CD14-positive monocyte (primary cell): ENCODE measurements at regions of chr13 and their contacts with region 1.

Region 1: GRCh38 chr13:48879854-48880253 is 95.9 kb upstream of the FNDC3A start:
- DNase-seq: no peak
- H3K4me3 ChIP-seq: no peak overlapping the region
- H3K4me3 Mint-ChIP-seq: no peak overlapping the region
- H3K27ac ChIP-seq: no peak overlapping the region
- H3K27ac Mint-ChIP-seq: peak overlapping the region in 2 of 7 donors; percentile 15 to 23
- H3K4me1 ChIP-seq: peaks cover 16 to 18% of the 10 kb centered on the region in 2 donors
- H3K4me1 Mint-ChIP-seq: peaks cover 32% of the 10 kb centered on the region
- H3K27me3 ChIP-seq: no peaks in the 10 kb centered on the region
- H3K27me3 Mint-ChIP-seq: peaks cover 0 to 3% (median 2%) of the 10 kb centered on the region in 3 donors
- CTCF ChIP-seq: no peak

Region 2: GRCh38 chr13:48731957-48732569 is 147.8 kb before region 1 on chr13:
- intact Hi-C with region 1: no loop called
- DNase-seq: peak; percentile 40 to 58 (median 54)
- H3K4me3 ChIP-seq: peak overlapping the region; percentile 2 to 64 (median 4)
- H3K4me3 Mint-ChIP-seq: peak overlapping the region; percentile 81 to 95
- H3K27ac ChIP-seq: peak overlapping the region in 1 of 2 donors; percentile 32
- H3K27ac Mint-ChIP-seq: peak overlapping the region; percentile 50 to 80 (median 75)
- H3K4me1 ChIP-seq: peaks cover 9% of the 10 kb centered on the region in 2 donors
- H3K4me1 Mint-ChIP-seq: peaks cover 18% of the 10 kb centered on the region
- H3K27me3 ChIP-seq: no peaks in the 10 kb centered on the region
- H3K27me3 Mint-ChIP-seq: peaks cover 0 to 2% (median 0%) of the 10 kb centered on the region in 3 donors
- CTCF ChIP-seq: peak; percentile 90

Region 3: DNA sequence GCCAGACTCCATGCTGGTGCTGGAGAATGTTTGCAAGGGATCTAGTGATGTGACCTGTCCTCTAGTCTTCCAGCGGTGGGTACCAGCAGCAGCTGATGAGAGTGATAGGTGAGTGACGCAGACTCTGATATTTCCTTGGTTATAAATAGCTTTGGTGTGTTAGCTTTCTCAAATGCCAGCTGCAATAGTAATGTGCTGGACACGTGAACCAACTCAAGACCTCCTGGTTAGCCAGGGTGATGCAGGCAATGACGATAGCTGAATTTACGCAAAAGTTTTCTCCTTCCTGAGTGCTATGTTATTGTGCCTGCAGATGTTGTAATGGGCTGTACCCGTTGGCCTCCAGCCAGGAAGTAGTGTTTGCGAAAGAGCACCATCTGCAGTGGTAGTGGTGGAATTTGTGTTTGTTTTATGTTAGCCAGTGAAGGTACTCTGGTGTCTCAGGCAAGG is 96.6 kb before region 1 on chr13:
- intact Hi-C with region 1: loop called in 1 of 2 experiments (anchors 5 kb)
- DNase-seq: peak; percentile 98 to 99 (median 98)
- H3K4me3 ChIP-seq: peak overlapping the region in 1 of 3 experiments; percentile 18
- H3K4me3 Mint-ChIP-seq: peak overlapping the region; percentile 35 to 39
- H3K27ac ChIP-seq: peak overlapping the region; percentile 73 to 92
- H3K27ac Mint-ChIP-seq: peak overlapping the region; percentile 94 to 99 (median 98)
- H3K4me1 ChIP-seq: peaks cover 21 to 26% of the 10 kb centered on the region in 2 donors
- H3K4me1 Mint-ChIP-seq: peaks cover 32% of the 10 kb centered on the region
- H3K27me3 ChIP-seq: no peaks in the 10 kb centered on the region
- H3K27me3 Mint-ChIP-seq: peaks cover 0 to 2% (median 0%) of the 10 kb centered on the region in 3 donors
- CTCF ChIP-seq: peak; percentile 12